ENCODE measurements at regions of chr4 and their contacts with region 1.

Region 1: DNA sequence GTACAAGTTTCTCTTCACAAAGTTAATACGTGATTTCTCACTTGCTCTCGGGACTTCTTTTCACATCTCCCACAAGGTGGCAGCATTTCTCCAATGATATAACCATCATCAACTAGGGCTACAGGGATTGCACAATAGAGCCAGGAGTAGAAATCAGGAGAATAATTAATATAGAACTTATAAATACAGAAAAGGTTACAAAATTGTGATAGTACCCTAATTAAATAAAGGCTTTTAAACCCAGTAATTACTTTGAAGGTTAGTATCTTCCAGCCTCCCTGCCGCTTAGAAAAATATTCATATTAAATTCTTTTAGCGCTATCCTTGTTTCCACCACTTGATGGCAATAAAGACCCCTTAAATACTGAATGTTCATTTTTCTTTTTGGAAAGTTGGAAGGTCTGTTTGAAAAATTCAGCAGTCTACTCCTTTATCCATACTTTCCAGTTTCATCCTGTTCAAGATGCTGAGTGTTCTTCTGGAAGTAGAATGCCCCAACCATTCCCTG is 65.8 kb downstream of the RASGEF1B start:
- DNase-seq: no peak
- ATAC-seq: peak; percentile 87
- H3K4me3 ChIP-seq: no peak overlapping the region
- H3K27ac ChIP-seq: no peak overlapping the region
- H3K4me1 ChIP-seq: no peaks in the 10 kb centered on the region
- H3K27me3 ChIP-seq: no peaks in the 10 kb centered on the region

Region 2: GRCh38 chr4:81844717-81845116 is 438.8 kb after region 1 on chr4:
- intact Hi-C with region 1: loop called in 1 of 2 experiments (anchors 5 kb)
- DNase-seq: peak in 1 of 2 donors; percentile 79
- ATAC-seq: peak; percentile 91
- H3K4me3 ChIP-seq: no peak overlapping the region
- H3K27ac ChIP-seq: no peak overlapping the region
- H3K4me1 ChIP-seq: no peaks in the 10 kb centered on the region
- H3K27me3 ChIP-seq: no peaks in the 10 kb centered on the region

Region 3: DNA sequence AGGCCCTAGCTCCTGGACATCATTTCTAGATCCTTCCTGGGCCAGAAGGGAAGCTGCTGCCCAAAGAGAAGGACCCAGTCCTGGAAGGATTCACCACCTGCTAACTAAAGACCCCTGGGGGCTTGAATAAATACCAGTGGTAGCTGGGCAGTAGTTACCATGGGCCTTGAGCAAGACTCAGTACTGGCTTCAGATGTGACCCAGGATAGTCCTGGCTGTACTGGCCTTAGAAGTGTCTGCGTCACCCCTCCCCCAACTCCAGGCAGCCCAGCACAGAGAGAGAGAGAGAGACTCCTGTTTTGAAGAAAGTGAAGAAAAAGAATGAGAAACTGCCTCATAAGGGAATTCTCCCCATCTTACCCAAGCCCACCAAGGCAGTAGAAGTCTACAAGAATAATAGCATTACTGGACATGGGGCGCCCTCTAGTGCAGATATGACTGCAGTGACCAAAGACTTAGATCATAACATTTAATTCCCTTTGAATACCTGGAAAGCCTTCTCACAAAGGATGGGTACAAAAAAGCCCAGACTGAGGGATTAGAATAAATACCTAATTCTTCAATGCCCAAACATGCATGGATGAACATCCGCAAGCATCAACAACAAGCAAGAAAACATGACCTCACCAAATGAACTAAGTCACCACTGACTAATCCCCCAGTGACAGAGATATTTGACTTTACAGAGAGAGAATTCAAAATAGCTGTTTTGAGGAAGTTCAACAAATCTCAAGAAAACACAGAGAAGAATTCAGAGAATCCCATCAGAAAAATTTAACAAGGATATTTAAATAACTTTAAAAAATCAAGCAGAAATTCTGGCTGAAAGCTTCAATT is 796.1 kb after region 1 on chr4:
- intact Hi-C with region 1: loop called in 1 of 2 experiments (anchors 10 kb)
- DNase-seq: no peak
- ATAC-seq: no peak
- H3K4me3 ChIP-seq: no peak overlapping the region
- H3K27ac ChIP-seq: no peak overlapping the region
- H3K4me1 ChIP-seq: no peaks in the 10 kb centered on the region
- H3K27me3 ChIP-seq: no peaks in the 10 kb centered on the region

Region 4: DNA sequence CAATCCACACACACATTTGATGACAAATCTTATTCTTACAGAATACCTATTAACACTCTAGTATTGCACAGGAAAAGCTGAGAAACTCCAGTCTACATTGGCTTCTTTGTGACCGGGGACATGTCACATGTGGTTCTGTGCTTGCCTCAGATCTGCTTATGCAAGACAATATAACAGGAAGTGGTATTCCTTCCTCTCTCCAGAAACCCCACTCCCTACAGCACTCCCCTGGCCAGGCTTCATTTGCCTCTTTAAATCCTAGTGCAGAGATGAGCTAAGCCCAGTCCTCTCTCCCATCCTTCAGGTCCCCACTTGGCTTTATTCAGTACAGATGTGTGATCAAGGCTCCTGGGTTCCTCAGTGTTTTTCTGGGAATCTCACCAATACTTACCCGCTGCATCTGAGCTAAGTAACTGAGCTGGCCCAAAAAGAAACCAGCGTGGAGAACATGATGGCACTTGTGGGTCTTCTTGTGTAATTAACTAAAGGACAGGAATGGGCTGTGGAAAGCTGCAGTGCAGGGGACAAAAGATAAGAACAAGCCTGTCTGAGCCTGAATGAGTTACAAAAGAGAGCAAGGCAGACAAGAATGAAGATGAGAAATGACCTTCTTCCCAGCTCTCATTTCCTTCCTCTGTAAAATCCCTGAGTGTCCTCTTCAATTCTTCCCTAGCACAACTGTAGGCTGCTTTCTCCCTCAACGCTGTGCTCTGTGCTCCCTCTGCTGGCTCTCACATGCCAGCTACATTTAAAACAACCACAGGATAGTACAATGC is 862.3 kb after region 1 on chr4:
- intact Hi-C with region 1: loop called (anchors 5 kb)
- DNase-seq: peak in 1 of 2 donors; percentile 68
- ATAC-seq: peak; percentile 89
- H3K4me3 ChIP-seq: no peak overlapping the region
- H3K27ac ChIP-seq: no peak overlapping the region
- H3K4me1 ChIP-seq: no peaks in the 10 kb centered on the region
- H3K27me3 ChIP-seq: no peaks in the 10 kb centered on the region